ENCODE measurements at regions of chr14 and their contacts with region 1.

Region 1: GRCh38 chr14:45253068-45253753 is at the start of gene MIS18BP1:
- DNase-seq: peak; percentile 96
- H3K4me3 Mint-ChIP-seq: peak within 1 kb of the TSS; percentile 86
- H3K27ac Mint-ChIP-seq: peak within 1 kb of the TSS; percentile 95
- H3K4me1 Mint-ChIP-seq: peaks cover 17% of the 10 kb centered on the region
- H3K27me3 Mint-ChIP-seq: no peaks in the 10 kb centered on the region
- total RNA-seq, gene MIS18BP1: 53.7 to 58.5 TPM

Region 2: GRCh38 chr14:44620121-44621019 is 632.8 kb before region 1 on chr14:
- CTCF ChIA-PET with region 1: no interaction called
- POLR2A ChIA-PET with region 1: no interaction called
- intact Hi-C with region 1: no loop called
- DNase-seq: no peak
- H3K4me3 Mint-ChIP-seq: no peak overlapping the region
- H3K27ac Mint-ChIP-seq: no peak overlapping the region
- H3K4me1 Mint-ChIP-seq: no peaks in the 10 kb centered on the region
- H3K27me3 Mint-ChIP-seq: peaks cover 2% of the 10 kb centered on the region

Region 3: DNA sequence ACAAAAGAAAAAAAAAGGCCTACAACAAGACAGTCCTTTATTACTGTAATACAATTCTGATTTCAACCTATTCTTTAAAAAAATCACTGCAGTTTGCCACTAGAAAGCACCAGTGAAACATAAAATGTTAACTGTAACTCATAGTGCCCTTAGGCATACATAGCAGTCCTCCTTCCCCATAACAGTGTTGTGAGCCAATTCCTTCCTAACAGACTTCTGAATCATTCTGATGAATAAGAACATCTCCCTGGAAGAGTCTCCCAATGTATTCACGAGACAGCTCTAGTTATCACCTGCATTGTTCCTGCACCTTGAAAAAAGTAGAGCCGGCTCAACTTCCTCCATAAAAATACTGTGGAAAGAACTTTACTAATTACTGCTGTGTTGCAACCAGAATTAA is 532.5 kb before region 1 on chr14:
- CTCF ChIA-PET with region 1: no interaction called
- POLR2A ChIA-PET with region 1: no interaction called
- intact Hi-C with region 1: no loop called
- DNase-seq: no peak
- H3K4me3 Mint-ChIP-seq: no peak overlapping the region
- H3K27ac Mint-ChIP-seq: no peak overlapping the region
- H3K4me1 Mint-ChIP-seq: no peaks in the 10 kb centered on the region
- H3K27me3 Mint-ChIP-seq: no peaks in the 10 kb centered on the region

Region 4: GRCh38 chr14:44897045-44897844 is 356.0 kb before region 1 on chr14:
- CTCF ChIA-PET with region 1: interaction called, 3 read pairs
- POLR2A ChIA-PET with region 1: interaction called, 7 read pairs
- intact Hi-C with region 1: loop called (anchors 1 kb)
- DNase-seq: peak; percentile 99
- H3K4me3 Mint-ChIP-seq: peak overlapping the region; percentile 87
- H3K27ac Mint-ChIP-seq: peak overlapping the region; percentile 83
- H3K4me1 Mint-ChIP-seq: peaks cover 14% of the 10 kb centered on the region
- H3K27me3 Mint-ChIP-seq: no peaks in the 10 kb centered on the region

Region 5: GRCh38 chr14:44961604-44962333 is 291.4 kb before region 1 on chr14 and contains the starts of genes KLHL28 and TOGARAM1:
- CTCF ChIA-PET with region 1: interaction called, 4 read pairs
- POLR2A ChIA-PET with region 1: interaction called, 12 read pairs
- intact Hi-C with region 1: loop called (anchors 1 kb)
- DNase-seq: peak; percentile 97
- H3K4me3 Mint-ChIP-seq: no peak within 1 kb of the TSS
- H3K27ac Mint-ChIP-seq: no peak within 1 kb of the TSS
- H3K4me1 Mint-ChIP-seq: peaks cover 54% of the 10 kb centered on the region
- H3K27me3 Mint-ChIP-seq: no peaks in the 10 kb centered on the region
- total RNA-seq, gene KLHL28: 11.0 to 11.8 TPM
- total RNA-seq, gene TOGARAM1: 4.5 to 5.4 TPM

Region 6: GRCh38 chr14:45112889-45113781 is 140.1 kb before region 1 on chr14:
- CTCF ChIA-PET with region 1: no interaction called
- POLR2A ChIA-PET with region 1: no interaction called
- intact Hi-C with region 1: loop called (anchors 1 kb)
- DNase-seq: no peak
- H3K4me3 Mint-ChIP-seq: no peak overlapping the region
- H3K27ac Mint-ChIP-seq: peak overlapping the region; percentile 75
- H3K4me1 Mint-ChIP-seq: peaks cover 30% of the 10 kb centered on the region
- H3K27me3 Mint-ChIP-seq: no peaks in the 10 kb centered on the region

Region 7: GRCh38 chr14:45177076-45177475 is 76.1 kb before region 1 on chr14:
- CTCF ChIA-PET with region 1: no interaction called
- POLR2A ChIA-PET with region 1: no interaction called
- intact Hi-C with region 1: no loop called
- DNase-seq: no peak
- H3K4me3 Mint-ChIP-seq: no peak overlapping the region
- H3K27ac Mint-ChIP-seq: no peak overlapping the region
- H3K4me1 Mint-ChIP-seq: no peaks in the 10 kb centered on the region
- H3K27me3 Mint-ChIP-seq: no peaks in the 10 kb centered on the region

Region 8: DNA sequence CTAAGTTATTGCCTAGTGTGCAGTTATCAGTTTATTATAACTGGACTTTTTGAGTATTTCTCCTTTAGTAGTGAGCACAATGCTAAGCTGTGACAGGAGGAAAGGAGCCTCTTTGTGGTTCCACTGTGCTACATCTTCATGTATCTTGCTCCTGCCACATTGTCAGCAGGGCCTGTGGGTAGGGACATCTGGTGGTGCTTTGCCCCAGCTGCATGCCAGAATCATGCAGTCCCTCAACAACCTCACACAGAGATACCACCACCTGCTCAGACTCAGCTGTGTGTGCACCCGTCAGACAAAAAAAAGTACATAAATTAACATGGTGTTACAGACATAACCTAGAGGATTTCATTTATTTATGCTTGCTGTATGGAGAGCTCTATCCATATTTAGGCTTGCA is 51.3 kb before region 1 on chr14:
- CTCF ChIA-PET with region 1: interaction called, 4 read pairs
- POLR2A ChIA-PET with region 1: no interaction called
- intact Hi-C with region 1: loop called (anchors 5 kb)
- DNase-seq: peak; percentile 43
- H3K4me3 Mint-ChIP-seq: no peak overlapping the region
- H3K27ac Mint-ChIP-seq: no peak overlapping the region
- H3K4me1 Mint-ChIP-seq: peaks cover 11% of the 10 kb centered on the region
- H3K27me3 Mint-ChIP-seq: no peaks in the 10 kb centered on the region

Region 9: GRCh38 chr14:45553981-45554380 is 300.8 kb after region 1 on chr14:
- CTCF ChIA-PET with region 1: no interaction called
- POLR2A ChIA-PET with region 1: no interaction called
- intact Hi-C with region 1: no loop called
- DNase-seq: no peak
- H3K4me3 Mint-ChIP-seq: no peak overlapping the region
- H3K27ac Mint-ChIP-seq: no peak overlapping the region
- H3K4me1 Mint-ChIP-seq: no peaks in the 10 kb centered on the region
- H3K27me3 Mint-ChIP-seq: no peaks in the 10 kb centered on the region

Measured in activated CD4-positive, alpha-beta memory T cell treated with anti-CD3 and anti-CD28 coated beads for 36 hours (primary cell).